Naive thymus-derived CD4-positive, alpha-beta T cell (primary cell): ENCODE measurements at regions of chr5 and their contacts with region 1.

Region 1: GRCh38 chr5:32312647-32313523 is at the start of gene MTMR12:
- DNase-seq: peak; percentile 99 to 100 (median 100)
- ATAC-seq: peak; percentile 96
- H3K4me3 ChIP-seq: peak within 1 kb of the TSS; percentile 72
- H3K4me3 Mint-ChIP-seq: peak within 1 kb of the TSS; percentile 89 to 98 (median 92)
- H3K27ac ChIP-seq: peak within 1 kb of the TSS; percentile 79
- H3K27ac Mint-ChIP-seq: peak within 1 kb of the TSS; percentile 88 to 98 (median 95)
- H3K4me1 ChIP-seq: peaks cover 9 to 14% of the 10 kb centered on the region in 2 donors
- H3K4me1 Mint-ChIP-seq: peaks cover 30 to 43% (median 38%) of the 10 kb centered on the region in 7 donors
- H3K27me3 ChIP-seq: no peaks in the 10 kb centered on the region
- H3K27me3 Mint-ChIP-seq: no peaks in the 10 kb centered on the region
- total RNA-seq, gene MTMR12: 19.0 to 28.2 (median 24.0) TPM

Region 2: GRCh38 chr5:31531888-31532710 is 780.8 kb before region 1 on chr5 and contains the starts of genes C5orf22 and DROSHA:
- CTCF ChIA-PET with region 1: no interaction called
- POLR2A ChIA-PET with region 1: no interaction called
- intact Hi-C with region 1: loop called (anchors 1 kb)
- DNase-seq: peak; percentile 72 to 90 (median 88)
- ATAC-seq: peak; percentile 99
- H3K4me3 ChIP-seq: peak within 1 kb of the TSS; percentile 97
- H3K4me3 Mint-ChIP-seq: peak within 1 kb of the TSS; percentile 93 to 100 (median 98)
- H3K27ac ChIP-seq: peak within 1 kb of the TSS; percentile 89
- H3K27ac Mint-ChIP-seq: peak within 1 kb of the TSS; percentile 83 to 96 (median 90)
- H3K4me1 ChIP-seq: peaks cover 13 to 24% of the 10 kb centered on the region in 2 donors
- H3K4me1 Mint-ChIP-seq: peaks cover 29 to 85% (median 73%) of the 10 kb centered on the region in 7 donors
- H3K27me3 ChIP-seq: no peaks in the 10 kb centered on the region
- H3K27me3 Mint-ChIP-seq: no peaks in the 10 kb centered on the region
- total RNA-seq, gene C5orf22: 10.6 to 31.3 (median 30.6) TPM
- total RNA-seq, gene DROSHA: 48.5 to 92.0 (median 75.7) TPM

Region 3: GRCh38 chr5:32232441-32233219 is 80.3 kb before region 1 on chr5:
- CTCF ChIA-PET with region 1: no interaction called
- POLR2A ChIA-PET with region 1: no interaction called
- intact Hi-C with region 1: loop called in 1 of 2 experiments (anchors 1 kb)
- DNase-seq: peak; percentile 45 to 73 (median 64)
- ATAC-seq: peak; percentile 88
- H3K4me3 ChIP-seq: no peak overlapping the region
- H3K4me3 Mint-ChIP-seq: no peak overlapping the region
- H3K27ac ChIP-seq: no peak overlapping the region
- H3K27ac Mint-ChIP-seq: peak overlapping the region; percentile 45 to 71 (median 62)
- H3K4me1 ChIP-seq: no peaks in the 10 kb centered on the region
- H3K4me1 Mint-ChIP-seq: peaks cover 0 to 12% (median 7%) of the 10 kb centered on the region in 7 donors
- H3K27me3 ChIP-seq: no peaks in the 10 kb centered on the region
- H3K27me3 Mint-ChIP-seq: no peaks in the 10 kb centered on the region

Region 4: GRCh38 chr5:32261198-32261597 is 51.7 kb before region 1 on chr5:
- CTCF ChIA-PET with region 1: no interaction called
- POLR2A ChIA-PET with region 1: no interaction called
- intact Hi-C with region 1: no loop called
- DNase-seq: peak in 1 of 9 donors; percentile 32
- ATAC-seq: peak; percentile 38
- H3K4me3 ChIP-seq: no peak overlapping the region
- H3K4me3 Mint-ChIP-seq: no peak overlapping the region
- H3K27ac ChIP-seq: no peak overlapping the region
- H3K27ac Mint-ChIP-seq: peak overlapping the region in 6 of 9 donors; percentile 16 to 77 (median 46)
- H3K4me1 ChIP-seq: no peaks in the 10 kb centered on the region
- H3K4me1 Mint-ChIP-seq: peaks cover 0 to 18% (median 5%) of the 10 kb centered on the region in 7 donors
- H3K27me3 ChIP-seq: no peaks in the 10 kb centered on the region
- H3K27me3 Mint-ChIP-seq: no peaks in the 10 kb centered on the region

Region 5: GRCh38 chr5:32283539-32284377 is 29.1 kb before region 1 on chr5:
- CTCF ChIA-PET with region 1: no interaction called
- POLR2A ChIA-PET with region 1: interaction called, 3 read pairs
- intact Hi-C with region 1: loop called (anchors 1 kb)
- DNase-seq: no peak
- ATAC-seq: peak; percentile 68
- H3K4me3 ChIP-seq: no peak overlapping the region
- H3K4me3 Mint-ChIP-seq: no peak overlapping the region
- H3K27ac ChIP-seq: no peak overlapping the region
- H3K27ac Mint-ChIP-seq: peak overlapping the region in 5 of 9 donors; percentile 7 to 55 (median 14)
- H3K4me1 ChIP-seq: peaks cover 0 to 12% of the 10 kb centered on the region in 2 donors
- H3K4me1 Mint-ChIP-seq: peaks cover 10 to 67% (median 63%) of the 10 kb centered on the region in 7 donors
- H3K27me3 ChIP-seq: no peaks in the 10 kb centered on the region
- H3K27me3 Mint-ChIP-seq: no peaks in the 10 kb centered on the region

Region 6: GRCh38 chr5:32444431-32445286 is 131.8 kb after region 1 on chr5 and contains the start of gene ZFR:
- CTCF ChIA-PET with region 1: no interaction called
- POLR2A ChIA-PET with region 1: interaction called, 3 read pairs
- intact Hi-C with region 1: loop called (anchors 1 kb)
- DNase-seq: peak; percentile 91 to 95 (median 93)
- ATAC-seq: peak; percentile 95
- H3K4me3 ChIP-seq: peak within 1 kb of the TSS; percentile 67
- H3K4me3 Mint-ChIP-seq: peak within 1 kb of the TSS; percentile 79 to 94 (median 92)
- H3K27ac ChIP-seq: peak within 1 kb of the TSS; percentile 93
- H3K27ac Mint-ChIP-seq: peak within 1 kb of the TSS; percentile 75 to 96 (median 93)
- H3K4me1 ChIP-seq: peaks cover 16 to 20% of the 10 kb centered on the region in 2 donors
- H3K4me1 Mint-ChIP-seq: peaks cover 24 to 38% (median 33%) of the 10 kb centered on the region in 7 donors
- H3K27me3 ChIP-seq: no peaks in the 10 kb centered on the region
- H3K27me3 Mint-ChIP-seq: peaks cover 0 to 17% (median 0%) of the 10 kb centered on the region in 5 donors
- total RNA-seq, gene ZFR: 53.4 to 59.3 (median 58.0) TPM

Region 7: DNA sequence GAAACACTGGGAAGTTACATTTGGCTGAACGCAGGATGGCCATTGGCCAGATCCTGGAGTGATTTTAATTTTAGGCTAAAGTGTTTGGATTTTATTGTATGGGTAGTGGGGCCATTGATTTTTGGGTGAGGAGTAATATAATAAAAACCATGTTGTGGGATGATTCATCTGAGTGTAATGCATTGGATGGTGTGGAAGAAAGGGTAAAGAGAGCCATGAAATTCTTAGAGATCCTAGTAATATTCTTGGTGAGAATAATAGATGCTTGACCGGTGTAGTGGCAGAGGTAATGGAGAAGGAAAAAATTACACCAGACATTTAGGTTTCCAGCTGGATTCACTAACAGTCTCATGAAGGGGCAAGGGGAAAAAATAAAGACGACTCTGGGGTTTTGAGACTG is 556.3 kb after region 1 on chr5:
- CTCF ChIA-PET with region 1: no interaction called
- POLR2A ChIA-PET with region 1: no interaction called
- intact Hi-C with region 1: no loop called
- DNase-seq: no peak
- ATAC-seq: no peak
- H3K4me3 ChIP-seq: no peak overlapping the region
- H3K4me3 Mint-ChIP-seq: no peak overlapping the region
- H3K27ac ChIP-seq: no peak overlapping the region
- H3K27ac Mint-ChIP-seq: no peak overlapping the region
- H3K4me1 ChIP-seq: no peaks in the 10 kb centered on the region
- H3K4me1 Mint-ChIP-seq: no peaks in the 10 kb centered on the region
- H3K27me3 ChIP-seq: no peaks in the 10 kb centered on the region
- H3K27me3 Mint-ChIP-seq: no peaks in the 10 kb centered on the region

Region 8: DNA sequence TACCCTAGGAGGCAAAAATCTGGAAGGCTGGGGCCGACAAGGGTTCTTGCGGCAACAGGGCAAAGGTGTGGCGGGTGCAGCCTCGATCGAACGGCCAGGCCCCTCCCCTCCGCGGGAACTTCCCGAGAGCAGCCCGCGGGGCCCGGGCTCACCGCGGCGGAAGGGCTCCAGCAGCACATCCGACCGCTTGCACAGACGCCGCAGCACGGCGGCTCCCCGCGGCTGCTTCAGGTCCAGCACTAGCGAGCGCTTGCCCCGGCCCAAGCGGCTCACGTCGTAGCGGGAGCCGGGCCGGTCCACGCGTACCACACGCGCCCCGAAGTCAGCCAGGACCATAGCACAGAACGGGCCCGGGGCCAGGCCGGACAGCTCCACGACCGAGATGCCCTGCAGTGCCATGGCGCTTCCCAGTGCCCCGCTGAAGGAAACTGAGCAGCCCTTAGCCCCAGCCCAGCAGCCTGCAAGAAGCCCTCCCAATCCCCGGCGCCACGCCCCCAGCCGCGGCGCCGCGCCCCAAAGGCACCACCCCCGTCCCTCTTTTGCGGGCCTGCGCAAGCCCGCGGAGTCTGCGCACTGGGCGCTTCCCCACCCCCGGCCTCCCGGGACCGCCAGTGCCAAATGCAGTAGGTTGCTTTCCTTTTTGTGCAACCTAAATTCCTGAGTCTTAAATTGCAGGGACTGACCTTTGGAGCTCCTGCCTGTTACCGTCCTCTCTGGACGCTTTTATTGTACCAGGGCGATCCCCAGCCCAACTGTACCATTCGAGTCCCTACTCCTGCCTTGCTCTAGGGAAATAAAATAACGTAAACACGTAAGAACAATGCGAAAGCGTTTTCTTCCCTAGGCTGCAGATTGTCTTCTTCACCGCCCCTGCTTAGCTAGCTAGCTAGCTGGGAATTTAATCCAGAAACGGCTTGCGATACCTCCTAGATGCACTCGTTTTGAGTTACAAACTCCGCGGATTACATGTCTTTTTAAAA is 1695.0 kb after region 1 on chr5 and contains the start of gene AMACR:
- CTCF ChIA-PET with region 1: no interaction called
- POLR2A ChIA-PET with region 1: no interaction called
- intact Hi-C with region 1: loop called (anchors 2 to 5 kb)
- DNase-seq: peak; percentile 73 to 91 (median 81)
- ATAC-seq: peak; percentile 95
- H3K4me3 ChIP-seq: peak within 1 kb of the TSS; percentile 85
- H3K4me3 Mint-ChIP-seq: peak within 1 kb of the TSS; percentile 79 to 98 (median 94)
- H3K27ac ChIP-seq: peak within 1 kb of the TSS; percentile 83
- H3K27ac Mint-ChIP-seq: peak within 1 kb of the TSS; percentile 87 to 97 (median 96)
- H3K4me1 ChIP-seq: peaks cover 9 to 18% of the 10 kb centered on the region in 2 donors
- H3K4me1 Mint-ChIP-seq: peaks cover 23 to 39% (median 32%) of the 10 kb centered on the region in 7 donors
- H3K27me3 ChIP-seq: no peaks in the 10 kb centered on the region
- H3K27me3 Mint-ChIP-seq: no peaks in the 10 kb centered on the region
- total RNA-seq, gene AMACR: 2.7 to 8.3 (median 7.3) TPM